Calu3 (cell line): ENCODE measurements at regions of chr18 and their contacts with region 1.

Region 1: GRCh38 chr18:37335409-37335736 is 230.2 kb downstream of the CELF4 start:
- DNase-seq: peak; percentile 31
- H3K4me3 Mint-ChIP-seq: no peak overlapping the region
- H3K27ac Mint-ChIP-seq: no peak overlapping the region
- H3K4me1 Mint-ChIP-seq: no peaks in the 10 kb centered on the region
- H3K27me3 Mint-ChIP-seq: peaks cover 100% of the 10 kb centered on the region
- CTCF ChIP-seq: peak; percentile 25

Region 2: GRCh38 chr18:37019157-37019827 is 316.1 kb before region 1 on chr18:
- CTCF ChIA-PET with region 1: interaction called, 4 read pairs
- intact Hi-C with region 1: loop called (anchors 5 kb)
- DNase-seq: peak; percentile 44
- H3K4me3 Mint-ChIP-seq: no peak overlapping the region
- H3K27ac Mint-ChIP-seq: no peak overlapping the region
- H3K4me1 Mint-ChIP-seq: no peaks in the 10 kb centered on the region
- H3K27me3 Mint-ChIP-seq: no peaks in the 10 kb centered on the region
- CTCF ChIP-seq: peak; percentile 67

Region 3: DNA sequence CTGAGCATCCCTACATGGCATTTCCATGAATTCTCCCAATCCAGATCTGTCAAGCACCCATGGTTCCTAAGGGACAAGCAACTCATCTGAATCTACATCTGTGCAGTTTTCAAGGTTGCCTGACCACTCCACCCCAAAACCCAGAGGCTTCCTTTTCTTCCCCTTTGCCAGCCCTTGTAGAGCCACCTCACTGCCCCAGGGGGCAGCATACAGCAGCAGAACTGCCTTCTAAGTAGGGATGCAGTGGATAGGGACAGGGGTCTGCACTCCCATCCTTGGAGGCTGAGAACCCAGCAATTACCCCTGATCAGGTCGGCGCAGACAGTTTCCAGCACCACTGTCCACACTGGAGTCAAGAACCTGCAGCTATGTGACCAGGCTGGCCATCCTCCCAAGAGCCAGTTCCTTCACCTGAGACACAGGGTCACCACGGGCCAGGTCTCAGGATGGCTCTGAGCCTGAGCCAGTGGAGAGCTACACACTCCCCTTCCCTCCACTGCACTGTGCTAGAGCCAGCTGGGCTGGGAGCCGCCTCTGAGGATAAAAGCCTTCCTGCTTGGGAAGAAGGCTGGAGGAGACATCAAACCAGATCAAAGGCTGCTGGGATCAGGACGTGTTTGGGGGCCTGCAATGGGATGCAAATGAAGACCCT is 52.9 kb before region 1 on chr18:
- CTCF ChIA-PET with region 1: interaction called, 4 read pairs
- intact Hi-C with region 1: loop called (anchors 10 kb)
- DNase-seq: peak; percentile 26
- H3K4me3 Mint-ChIP-seq: no peak overlapping the region
- H3K27ac Mint-ChIP-seq: no peak overlapping the region
- H3K4me1 Mint-ChIP-seq: no peaks in the 10 kb centered on the region
- H3K27me3 Mint-ChIP-seq: peaks cover 100% of the 10 kb centered on the region
- CTCF ChIP-seq: peak; percentile 65

Region 4: DNA sequence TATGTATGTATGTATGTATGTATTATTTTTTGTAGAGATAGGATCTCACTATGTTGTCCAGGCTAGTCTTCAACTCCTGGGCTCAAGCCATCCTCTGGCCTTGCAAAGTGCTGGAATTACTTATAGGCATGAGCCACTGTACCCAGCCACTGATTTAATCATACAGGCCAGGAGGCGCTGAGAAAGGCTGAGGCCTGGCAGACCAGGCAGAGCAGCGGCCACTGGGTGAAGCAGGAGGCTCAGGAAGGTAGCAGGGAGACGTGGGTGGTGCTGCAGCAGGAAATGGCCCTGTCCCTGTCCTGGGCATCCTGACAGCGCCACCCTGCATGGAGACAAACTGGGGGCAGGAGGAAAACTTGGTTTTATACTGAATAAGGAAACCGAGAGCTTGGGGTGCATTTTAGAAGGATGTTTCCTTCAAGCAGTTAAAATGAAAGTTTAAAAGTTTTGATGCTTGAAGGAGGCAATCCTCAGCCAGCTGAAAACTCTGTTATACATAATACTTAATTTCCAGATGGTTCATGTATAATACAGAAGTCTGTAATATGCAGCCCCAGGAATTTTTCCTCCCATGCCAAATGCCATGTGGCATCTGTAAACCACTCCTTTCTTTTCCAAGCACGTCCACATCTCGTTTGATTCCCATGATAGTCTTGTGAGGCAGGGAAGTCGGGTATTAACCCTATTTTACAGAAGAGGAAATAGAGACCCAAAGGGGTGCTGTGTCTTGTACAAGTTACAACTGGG is 47.8 kb after region 1 on chr18:
- CTCF ChIA-PET with region 1: no interaction called
- intact Hi-C with region 1: no loop called
- DNase-seq: no peak
- H3K4me3 Mint-ChIP-seq: no peak overlapping the region
- H3K27ac Mint-ChIP-seq: no peak overlapping the region
- H3K4me1 Mint-ChIP-seq: no peaks in the 10 kb centered on the region
- H3K27me3 Mint-ChIP-seq: peaks cover 83% of the 10 kb centered on the region
- CTCF ChIP-seq: no peak